Dorsolateral prefrontal cortex (tissue), 120 donors: ENCODE measurements at regions of chr15 and their contacts with region 1.

Region 1: DNA sequence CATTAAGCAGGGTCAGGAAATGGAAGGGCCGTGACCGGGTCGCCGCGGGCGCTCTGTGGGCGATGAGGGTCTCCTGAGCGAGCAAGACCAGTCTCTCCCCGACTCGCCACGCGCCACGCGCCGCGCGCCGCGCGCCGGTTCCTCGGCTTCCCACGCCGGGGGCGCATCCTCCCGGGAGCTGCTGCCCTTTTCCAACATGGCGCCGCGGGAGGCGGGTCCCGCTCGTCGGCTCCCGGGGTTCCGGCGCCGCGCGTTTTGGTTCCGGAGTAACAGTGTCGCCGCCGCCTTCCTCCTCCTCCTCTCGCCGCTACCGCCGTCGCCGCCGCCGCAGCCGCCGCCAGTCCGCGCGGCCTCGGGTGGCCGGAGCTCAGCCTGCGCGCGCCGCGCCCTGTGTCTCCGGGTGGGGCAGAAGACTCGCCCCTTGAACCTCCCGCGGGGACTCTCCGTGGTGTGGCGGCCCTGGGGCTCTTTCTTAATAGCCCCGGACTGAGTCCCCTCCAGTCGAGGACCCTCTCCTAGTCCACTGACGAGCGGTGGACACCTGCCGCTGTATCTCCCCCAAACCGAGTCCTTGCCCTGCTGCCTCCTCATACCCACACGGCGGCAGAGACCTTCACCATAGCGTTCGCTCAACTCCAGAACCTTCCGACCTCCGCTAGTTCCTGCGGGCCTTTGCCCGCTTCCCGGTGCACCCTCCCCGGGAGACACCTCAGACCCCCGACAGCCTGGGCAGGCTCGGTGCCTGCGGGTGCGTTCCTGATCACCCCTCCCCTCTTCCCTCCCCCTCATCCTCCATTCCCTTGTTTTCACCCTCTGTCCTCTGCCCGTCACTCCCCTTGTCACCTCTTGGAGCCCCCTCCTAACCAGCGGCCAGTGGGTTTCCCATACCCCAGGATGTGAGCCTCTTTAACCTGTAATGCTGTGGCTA is at the start of gene MAP2K5:
- DNase-seq: peak; percentile 76 to 93 (median 89)
- H3K4me3 ChIP-seq: peak within 1 kb of the TSS; percentile 56 to 98 (median 90)
- H3K27ac ChIP-seq: peak within 1 kb of the TSS; percentile 37 to 95 (median 89)
- H3K27me3 ChIP-seq: no peaks in the 10 kb centered on the region
- CTCF ChIP-seq: peak in 22 of 56 donors; percentile 6 to 42 (median 28)
- total RNA-seq, gene MAP2K5: 31.3 to 69.6 (median 47.1) TPM

Region 2: DNA sequence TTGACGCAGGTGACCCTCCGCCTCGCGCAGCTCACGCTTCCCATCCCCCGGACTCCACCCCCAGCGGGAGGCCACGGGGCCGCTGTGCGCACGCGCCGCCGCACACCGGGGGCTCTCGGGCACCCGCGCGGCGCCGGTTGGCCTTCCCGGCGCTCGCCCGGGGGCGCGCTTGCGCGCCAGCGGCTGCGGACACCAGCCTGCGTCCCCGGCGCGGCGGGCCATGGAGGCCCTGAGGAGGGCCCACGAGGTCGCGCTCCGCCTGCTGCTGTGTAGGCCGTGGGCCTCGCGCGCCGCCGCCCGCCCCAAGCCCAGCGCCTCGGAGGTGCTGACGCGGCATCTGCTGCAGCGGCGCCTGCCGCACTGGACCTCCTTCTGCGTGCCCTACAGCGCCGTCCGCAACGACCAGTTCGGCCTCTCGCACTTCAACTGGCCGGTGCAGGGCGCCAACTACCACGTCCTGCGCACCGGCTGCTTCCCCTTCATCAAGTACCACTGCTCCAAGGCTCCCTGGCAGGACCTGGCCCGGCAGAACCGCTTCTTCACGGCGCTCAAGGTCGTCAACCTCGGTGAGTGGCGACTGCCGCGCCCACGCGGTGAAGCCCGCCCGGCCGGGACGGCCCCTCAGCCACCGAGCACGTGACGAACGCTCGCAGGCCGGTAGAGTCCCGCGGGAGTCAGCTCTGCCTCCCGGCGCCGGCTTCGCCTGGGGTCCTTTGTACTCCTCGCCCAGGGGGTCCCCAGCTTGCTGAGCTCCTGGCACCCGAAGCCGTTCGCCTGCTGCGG is 21.5 kb before region 1 on chr15 and contains the start of gene C15orf61:
- intact Hi-C with region 1: loop called (anchors 1 to 2 kb)
- DNase-seq: peak; percentile 62 to 91 (median 80)
- H3K4me3 ChIP-seq: peak within 1 kb of the TSS; percentile 71 to 98 (median 92)
- H3K27ac ChIP-seq: peak within 1 kb of the TSS; percentile 77 to 98 (median 95)
- H3K27me3 ChIP-seq: no peaks in the 10 kb centered on the region
- CTCF ChIP-seq: peak in 33 of 56 donors; percentile 1 to 60 (median 29)
- total RNA-seq, gene C15orf61: 10.8 to 35.1 (median 19.3) TPM

Region 3: GRCh38 chr15:67715170-67715569 is 172.5 kb after region 1 on chr15:
- intact Hi-C with region 1: loop called in 1 of 2 experiments (anchors 10 kb)
- DNase-seq: no peak
- H3K4me3 ChIP-seq: peak overlapping the region in 1 of 59 donors; percentile 10
- H3K27ac ChIP-seq: peak overlapping the region in 39 of 59 donors; percentile 0 to 88 (median 63)
- H3K27me3 ChIP-seq: no peaks in the 10 kb centered on the region
- CTCF ChIP-seq: no peak

Region 4: GRCh38 chr15:68277603-68278344 is 735.1 kb after region 1 on chr15 and contains the start of gene FEM1B:
- intact Hi-C with region 1: loop called (anchors 5 to 10 kb)
- DNase-seq: peak; percentile 78 to 93 (median 88)
- H3K4me3 ChIP-seq: peak within 1 kb of the TSS; percentile 63 to 100 (median 94)
- H3K27ac ChIP-seq: peak within 1 kb of the TSS; percentile 95 to 100 (median 99)
- H3K27me3 ChIP-seq: no peaks in the 10 kb centered on the region
- CTCF ChIP-seq: peak in 25 of 56 donors; percentile 3 to 51 (median 22)
- total RNA-seq, gene FEM1B: 63.2 to 136 (median 101) TPM